Activated CD4-positive, alpha-beta memory T cell treated with anti-CD3 and anti-CD28 coated beads, Interleukin-2, amount 10 ng/mL, durations not matched to agents 7 days and 5 days (primary cell): ENCODE measurements at regions of chr14 and their contacts with region 1.

Region 1: DNA sequence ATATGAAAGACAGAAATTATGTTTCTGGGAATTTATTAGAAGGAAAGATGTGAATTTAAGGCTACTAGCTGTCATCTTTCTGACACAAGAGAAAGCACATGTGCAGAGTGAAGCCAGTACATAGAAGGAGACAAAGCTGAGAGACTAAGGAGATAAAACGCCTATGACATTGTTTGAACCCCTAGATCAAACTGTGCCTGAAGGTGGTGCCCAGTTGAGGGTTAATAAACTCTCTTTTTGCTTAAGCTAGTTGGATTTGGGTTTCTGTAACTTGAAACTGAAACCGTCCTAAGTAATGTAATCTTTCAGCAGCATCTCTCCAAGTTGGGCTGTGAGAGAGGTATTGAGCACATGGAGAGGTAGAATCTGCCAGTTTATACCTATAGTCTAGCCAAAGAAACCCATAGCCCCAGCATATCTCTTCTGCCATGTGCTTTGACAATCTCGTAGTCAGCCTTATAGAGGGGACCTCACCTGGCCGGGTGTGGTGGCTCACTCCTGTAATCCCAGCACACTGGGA is 84.2 kb downstream of the LRRC74A start:
- DNase-seq: no peak
- H3K4me3 Mint-ChIP-seq: no peak overlapping the region
- H3K27ac Mint-ChIP-seq: peak overlapping the region; percentile 53
- H3K4me1 Mint-ChIP-seq: peaks cover 55% of the 10 kb centered on the region
- H3K27me3 Mint-ChIP-seq: no peaks in the 10 kb centered on the region

Region 2: DNA sequence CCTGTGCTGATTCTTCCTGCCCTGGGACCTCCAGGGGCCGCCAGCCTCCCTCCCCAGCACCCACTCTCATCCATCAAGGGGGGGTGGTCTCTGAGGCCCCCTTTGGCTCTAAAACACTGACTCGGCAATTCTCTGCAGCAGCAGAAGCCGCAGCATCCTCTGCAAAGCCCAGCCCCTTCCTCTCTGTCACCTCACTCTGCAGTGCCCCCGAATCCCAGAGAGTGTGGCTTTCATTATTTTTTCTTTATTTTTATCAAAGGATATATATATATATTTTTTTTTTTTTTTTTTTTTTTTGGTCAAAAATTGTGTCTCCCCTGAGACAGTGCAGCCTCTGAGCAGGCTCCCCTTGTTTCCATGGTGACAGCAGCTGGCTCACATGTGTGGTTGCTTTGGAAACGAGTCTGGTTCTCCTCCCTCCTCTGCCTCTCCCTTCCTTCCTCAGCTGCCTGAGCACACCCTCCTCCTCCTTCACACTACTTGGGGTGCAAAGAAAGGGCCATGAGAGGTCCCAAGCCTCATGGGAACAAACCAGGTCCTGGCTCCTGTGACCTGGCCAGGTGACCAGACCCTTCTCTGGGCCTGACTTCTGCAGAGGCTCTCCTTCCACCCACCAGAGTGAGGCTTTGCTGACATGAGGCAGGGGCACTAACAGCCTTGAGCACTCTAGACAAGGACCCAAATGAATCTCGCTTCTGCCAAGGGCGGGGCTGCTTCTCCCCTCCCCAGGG is 16.3 kb after region 1 on chr14:
- CTCF ChIA-PET with region 1: interaction called, 30 read pairs
- POLR2A ChIA-PET with region 1: interaction called, 3 read pairs
- DNase-seq: peak; percentile 77
- H3K4me3 Mint-ChIP-seq: peak overlapping the region; percentile 41
- H3K27ac Mint-ChIP-seq: peak overlapping the region; percentile 90
- H3K4me1 Mint-ChIP-seq: peaks cover 83% of the 10 kb centered on the region
- H3K27me3 Mint-ChIP-seq: peaks cover 7% of the 10 kb centered on the region

Region 3: GRCh38 chr14:76985540-76986230 is 75.3 kb after region 1 on chr14:
- CTCF ChIA-PET with region 1: no interaction called
- POLR2A ChIA-PET with region 1: no interaction called
- DNase-seq: no peak
- H3K4me3 Mint-ChIP-seq: no peak overlapping the region
- H3K27ac Mint-ChIP-seq: no peak overlapping the region
- H3K4me1 Mint-ChIP-seq: peaks cover 19% of the 10 kb centered on the region
- H3K27me3 Mint-ChIP-seq: peaks cover 17% of the 10 kb centered on the region

Region 4: DNA sequence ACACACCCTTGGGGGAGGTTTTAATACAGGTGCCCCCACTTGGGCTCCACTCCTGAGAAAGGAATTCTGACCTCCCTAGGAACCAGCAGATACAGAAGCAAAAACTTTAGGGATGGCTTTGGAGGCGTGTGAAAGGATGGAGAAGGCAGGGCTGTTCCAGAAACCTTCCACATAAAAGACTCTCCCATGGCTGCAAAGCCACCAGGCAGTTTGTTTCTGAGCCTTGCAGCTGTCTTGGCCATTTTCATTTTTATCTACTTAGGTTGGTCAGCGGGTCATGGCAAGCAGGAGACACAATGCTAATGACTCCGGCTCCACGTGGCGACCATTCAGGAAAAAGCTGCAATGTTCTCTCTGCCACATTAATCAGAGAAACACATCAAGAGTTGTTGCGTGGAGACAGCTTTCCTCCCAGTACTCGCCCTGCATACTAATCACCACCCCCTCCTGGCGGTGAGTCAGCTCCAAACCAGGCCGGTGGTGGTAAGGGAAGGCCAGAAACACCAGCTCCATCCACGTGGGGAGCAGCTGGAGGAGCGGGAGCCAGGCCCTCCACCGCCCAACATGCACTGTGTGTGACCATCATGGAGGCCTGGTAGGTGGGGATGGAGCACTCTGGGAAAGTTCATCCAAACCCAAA is 149.0 kb after region 1 on chr14:
- CTCF ChIA-PET with region 1: interaction called, 200 read pairs
- POLR2A ChIA-PET with region 1: interaction called, 3 read pairs
- DNase-seq: peak; percentile 47
- H3K4me3 Mint-ChIP-seq: no peak overlapping the region
- H3K27ac Mint-ChIP-seq: no peak overlapping the region
- H3K4me1 Mint-ChIP-seq: peaks cover 17% of the 10 kb centered on the region
- H3K27me3 Mint-ChIP-seq: no peaks in the 10 kb centered on the region